ENCODE measurements at regions of chr1 and their contacts with region 1.

Region 1: GRCh38 chr1:192907545-192908243 is 98.9 kb downstream of the RGS2 start:
- DNase-seq: no peak
- H3K4me3 ChIP-seq: no peak overlapping the region
- H3K27ac ChIP-seq: peak overlapping the region; percentile 71 to 84 (median 82)
- H3K4me1 ChIP-seq: peaks cover 0 to 68% (median 46%) of the 10 kb centered on the region in 4 donors
- H3K27me3 ChIP-seq: no peaks in the 10 kb centered on the region
- CTCF ChIP-seq: no peak
- EP300 ChIP-seq: peak; percentile 93 to 99 (median 98)
- POLR2A ChIP-seq: no peak

Region 2: GRCh38 chr1:192489748-192490147 is 417.9 kb before region 1 on chr1:
- intact Hi-C with region 1: loop called (anchors 5 kb)
- DNase-seq: peak; percentile 92
- H3K4me3 ChIP-seq: no peak overlapping the region
- H3K27ac ChIP-seq: peak overlapping the region; percentile 85 to 89 (median 88)
- H3K4me1 ChIP-seq: peaks cover 0 to 69% (median 51%) of the 10 kb centered on the region in 4 donors
- H3K27me3 ChIP-seq: no peaks in the 10 kb centered on the region
- CTCF ChIP-seq: no peak
- EP300 ChIP-seq: peak; percentile 81 to 97 (median 95)
- POLR2A ChIP-seq: no peak

Region 3: GRCh38 chr1:192559115-192560006 is 348.3 kb before region 1 on chr1:
- intact Hi-C with region 1: no loop called
- DNase-seq: no peak
- H3K4me3 ChIP-seq: no peak overlapping the region
- H3K27ac ChIP-seq: peak overlapping the region; percentile 25 to 56 (median 52)
- H3K4me1 ChIP-seq: no peaks in the 10 kb centered on the region
- H3K27me3 ChIP-seq: no peaks in the 10 kb centered on the region
- CTCF ChIP-seq: no peak
- EP300 ChIP-seq: no peak
- POLR2A ChIP-seq: no peak

Region 4: GRCh38 chr1:192592981-192593708 is 314.5 kb before region 1 on chr1:
- intact Hi-C with region 1: loop called (anchors 5 kb)
- DNase-seq: no peak
- H3K4me3 ChIP-seq: peak overlapping the region in 2 of 4 donors; percentile 9 to 10
- H3K27ac ChIP-seq: peak overlapping the region; percentile 75 to 83 (median 80)
- H3K4me1 ChIP-seq: peaks cover 0 to 22% (median 15%) of the 10 kb centered on the region in 4 donors
- H3K27me3 ChIP-seq: no peaks in the 10 kb centered on the region
- CTCF ChIP-seq: no peak
- EP300 ChIP-seq: peak in 2 of 4 donors; percentile 71 to 83
- POLR2A ChIP-seq: no peak

Region 5: GRCh38 chr1:193019442-193020026 is 111.8 kb after region 1 on chr1:
- intact Hi-C with region 1: loop called (anchors 5 kb)
- DNase-seq: no peak
- H3K4me3 ChIP-seq: peak overlapping the region in 1 of 4 donors; percentile 10
- H3K27ac ChIP-seq: peak overlapping the region in 3 of 4 donors; percentile 26 to 63 (median 54)
- H3K4me1 ChIP-seq: peaks cover 0 to 39% (median 17%) of the 10 kb centered on the region in 4 donors
- H3K27me3 ChIP-seq: no peaks in the 10 kb centered on the region
- CTCF ChIP-seq: peak; percentile 20 to 58 (median 46)
- EP300 ChIP-seq: no peak
- POLR2A ChIP-seq: no peak